Activated CD4-positive, alpha-beta memory T cell treated with anti-CD3 and anti-CD28 coated beads for 36 hours (primary cell): ENCODE measurements at regions of chr22 and their contacts with region 1.

Region 1: GRCh38 chr22:25747245-25747944 is 5.4 kb downstream of the MYO18B start:
- DNase-seq: no peak
- H3K4me3 Mint-ChIP-seq: no peak overlapping the region
- H3K27ac Mint-ChIP-seq: no peak overlapping the region
- H3K4me1 Mint-ChIP-seq: peaks cover 50% of the 10 kb centered on the region
- H3K27me3 Mint-ChIP-seq: peaks cover 17% of the 10 kb centered on the region

Region 2: DNA sequence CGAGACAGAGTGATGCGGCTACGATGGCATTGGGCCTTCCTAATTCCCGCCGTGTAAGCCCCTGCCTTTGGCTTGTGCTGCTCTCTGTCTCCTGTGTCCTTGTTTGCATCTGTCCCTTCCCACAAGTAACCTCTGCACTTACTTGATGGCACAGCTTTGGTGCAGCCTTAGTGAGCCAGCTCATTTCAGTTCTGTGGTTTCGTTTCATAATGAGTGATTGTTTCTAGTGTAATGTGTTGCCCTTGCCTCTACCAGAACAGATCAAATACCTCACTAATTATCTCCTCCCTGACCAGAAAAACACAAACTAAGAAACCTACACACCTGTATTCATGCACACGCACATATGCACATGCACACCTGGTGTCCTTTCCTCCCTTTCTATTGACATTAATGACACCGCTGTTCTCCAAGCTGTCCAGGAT is 124.1 kb before region 1 on chr22:
- CTCF ChIA-PET with region 1: no interaction called
- POLR2A ChIA-PET with region 1: no interaction called
- intact Hi-C with region 1: loop called (anchors 5 kb)
- DNase-seq: peak; percentile 52
- H3K4me3 Mint-ChIP-seq: no peak overlapping the region
- H3K27ac Mint-ChIP-seq: peak overlapping the region; percentile 47
- H3K4me1 Mint-ChIP-seq: peaks cover 16% of the 10 kb centered on the region
- H3K27me3 Mint-ChIP-seq: peaks cover 8% of the 10 kb centered on the region

Region 3: DNA sequence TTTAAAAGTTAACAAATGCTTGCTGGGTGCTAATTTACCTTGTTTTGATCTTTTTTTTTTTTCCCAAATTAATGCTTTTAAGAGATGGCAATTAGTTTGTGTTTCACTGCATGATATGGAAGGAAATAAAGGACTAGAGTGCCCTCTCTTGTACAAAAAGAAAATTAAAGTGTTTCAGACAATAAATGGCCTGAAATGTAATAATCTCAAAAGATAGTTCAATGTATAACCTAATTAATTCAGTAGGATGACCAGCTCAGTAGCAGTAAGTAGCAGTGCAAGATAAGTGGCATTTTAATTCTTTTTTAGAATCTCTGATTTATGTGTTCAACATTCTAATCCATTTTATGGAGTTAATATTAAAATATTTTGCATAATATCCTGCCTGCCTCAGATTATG is 45.4 kb before region 1 on chr22:
- CTCF ChIA-PET with region 1: interaction called, 5 read pairs
- POLR2A ChIA-PET with region 1: interaction called, 4 read pairs
- intact Hi-C with region 1: loop called (anchors 1 kb)
- DNase-seq: no peak
- H3K4me3 Mint-ChIP-seq: no peak overlapping the region
- H3K27ac Mint-ChIP-seq: no peak overlapping the region
- H3K4me1 Mint-ChIP-seq: peaks cover 13% of the 10 kb centered on the region
- H3K27me3 Mint-ChIP-seq: no peaks in the 10 kb centered on the region

Region 4: DNA sequence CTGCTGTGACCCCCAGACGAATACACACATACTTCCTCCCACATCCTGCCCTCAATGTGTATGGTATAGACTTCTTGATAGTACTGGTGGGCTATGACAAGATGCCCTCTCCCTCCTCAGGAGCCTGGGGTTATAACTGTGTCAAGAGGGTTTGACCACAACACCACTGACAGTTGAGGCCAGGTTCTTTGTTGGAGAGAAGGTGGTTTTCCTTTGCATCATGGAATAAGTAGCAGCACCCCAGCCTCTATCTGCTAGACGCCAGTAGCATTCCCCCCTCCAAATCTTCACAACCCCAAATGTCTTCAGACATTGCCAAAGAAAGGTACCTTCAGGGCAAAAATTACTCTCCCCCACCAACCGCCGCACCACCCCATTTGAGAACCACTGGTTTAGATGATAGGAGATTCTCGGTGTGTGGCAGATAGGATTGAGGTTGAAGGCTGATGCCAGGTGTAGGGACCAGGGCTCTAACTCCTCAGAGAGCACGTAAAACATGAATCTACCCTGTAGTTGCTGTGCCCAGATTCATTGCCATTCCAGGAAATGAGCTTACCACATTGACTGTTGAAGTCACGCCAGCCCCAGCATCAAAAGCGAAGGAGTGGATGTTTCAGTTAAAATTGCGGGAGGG is 10.9 kb before region 1 on chr22:
- CTCF ChIA-PET with region 1: interaction called, 3 read pairs
- POLR2A ChIA-PET with region 1: interaction called, 6 read pairs
- intact Hi-C with region 1: loop called (anchors 1 kb)
- DNase-seq: peak; percentile 75
- H3K4me3 Mint-ChIP-seq: peak overlapping the region; percentile 24
- H3K27ac Mint-ChIP-seq: peak overlapping the region; percentile 88
- H3K4me1 Mint-ChIP-seq: peaks cover 23% of the 10 kb centered on the region
- H3K27me3 Mint-ChIP-seq: peaks cover 3% of the 10 kb centered on the region

Region 5: GRCh38 chr22:25780673-25781072 is 33.3 kb after region 1 on chr22:
- CTCF ChIA-PET with region 1: no interaction called
- POLR2A ChIA-PET with region 1: no interaction called
- intact Hi-C with region 1: no loop called
- DNase-seq: no peak
- H3K4me3 Mint-ChIP-seq: no peak overlapping the region
- H3K27ac Mint-ChIP-seq: no peak overlapping the region
- H3K4me1 Mint-ChIP-seq: no peaks in the 10 kb centered on the region
- H3K27me3 Mint-ChIP-seq: no peaks in the 10 kb centered on the region